ENCODE measurements at regions of chr17 and their contacts with region 1.

Region 1: GRCh38 chr17:42744806-42745617 is at the start of gene EZH1:
- H3K4me3 ChIP-seq: peak within 1 kb of the TSS; percentile 73
- H3K27ac ChIP-seq: peak within 1 kb of the TSS; percentile 79
- H3K4me1 ChIP-seq: peaks cover 9% of the 10 kb centered on the region
- CTCF ChIP-seq: no peak

Region 2: GRCh38 chr17:42337442-42337841 is 407.6 kb before region 1 on chr17:
- CTCF ChIA-PET with region 1: no interaction called
- POLR2A ChIA-PET with region 1: no interaction called
- H3K4me3 ChIP-seq: no peak overlapping the region
- H3K27ac ChIP-seq: no peak overlapping the region
- H3K4me1 ChIP-seq: peaks cover 1% of the 10 kb centered on the region; the same call in 1 of the 2 replicates
- CTCF ChIP-seq: no peak

Region 3: DNA sequence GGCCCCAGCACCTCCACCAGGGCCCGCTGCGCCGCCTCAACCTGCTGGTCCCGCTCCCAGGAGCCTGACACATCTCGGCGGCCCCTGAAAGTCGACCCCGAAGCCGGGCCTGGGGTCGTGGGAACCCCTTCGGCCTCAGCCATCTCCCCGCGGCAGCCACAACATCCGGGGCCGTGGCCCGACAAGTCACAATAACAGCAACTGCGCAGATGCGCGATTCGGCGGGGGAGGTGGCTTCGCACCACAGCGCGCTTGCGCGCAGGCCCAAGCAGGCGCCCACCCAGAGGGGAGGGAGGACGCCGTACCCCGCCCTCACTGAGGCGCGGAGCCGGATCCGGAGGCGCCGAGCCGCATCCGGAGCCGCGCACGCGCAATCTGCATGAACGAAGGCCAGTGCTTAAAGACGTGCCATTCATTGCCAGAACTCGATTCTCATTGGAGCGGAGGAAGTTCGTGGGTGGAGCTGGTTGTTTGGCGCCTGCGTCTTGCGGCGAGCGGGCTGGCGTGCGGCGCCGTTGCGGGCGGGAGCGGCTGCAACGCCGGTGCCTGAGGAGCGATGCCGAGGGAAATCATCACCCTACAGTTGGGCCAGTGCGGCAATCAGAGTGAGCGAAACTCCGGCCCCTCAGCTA is 135.7 kb before region 1 on chr17 and contains the starts of genes RETREG3 and TUBG1:
- CTCF ChIA-PET with region 1: no interaction called
- POLR2A ChIA-PET with region 1: no interaction called
- H3K4me3 ChIP-seq: peak within 1 kb of the TSS; percentile 76
- H3K27ac ChIP-seq: peak within 1 kb of the TSS; percentile 78
- H3K4me1 ChIP-seq: peaks cover 14% of the 10 kb centered on the region
- CTCF ChIP-seq: no peak; the same call in 1 of the 2 replicates

Region 4: GRCh38 chr17:42704837-42705494 is 40.0 kb before region 1 on chr17:
- CTCF ChIA-PET with region 1: no interaction called
- POLR2A ChIA-PET with region 1: no interaction called
- H3K4me3 ChIP-seq: no peak overlapping the region
- H3K27ac ChIP-seq: no peak overlapping the region
- H3K4me1 ChIP-seq: no peaks in the 10 kb centered on the region
- CTCF ChIP-seq: no peak

Region 5: DNA sequence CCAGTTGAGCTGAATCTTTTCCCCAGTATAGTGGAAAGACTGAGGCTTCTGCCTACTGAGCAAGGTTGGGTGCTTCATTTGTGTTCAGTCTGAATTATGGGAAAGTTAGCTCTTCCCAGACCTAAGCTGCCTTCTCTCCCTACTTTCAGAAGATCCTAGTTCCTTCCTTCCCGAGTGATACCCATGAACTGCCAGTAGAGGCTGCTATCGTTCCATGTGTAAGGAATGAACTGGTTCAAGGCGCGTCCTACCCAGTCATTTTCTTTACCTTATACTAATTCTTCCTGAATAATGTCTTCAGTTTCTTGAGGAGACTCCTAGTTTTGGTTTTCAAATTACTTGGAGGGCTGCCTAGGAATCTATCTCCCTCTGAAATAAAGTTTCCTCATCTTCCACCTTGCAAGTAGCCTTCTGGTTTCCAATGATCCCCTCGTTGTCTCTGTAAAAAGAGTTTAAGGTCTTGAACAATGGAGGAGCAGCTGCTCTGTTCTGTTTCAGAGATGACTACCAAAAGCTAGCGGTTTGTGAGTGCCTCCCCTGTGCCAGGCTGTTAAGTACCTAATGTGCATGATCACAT is 98.4 kb after region 1 on chr17:
- CTCF ChIA-PET with region 1: no interaction called
- POLR2A ChIA-PET with region 1: no interaction called
- H3K4me3 ChIP-seq: no peak overlapping the region
- H3K27ac ChIP-seq: no peak overlapping the region
- H3K4me1 ChIP-seq: no peaks in the 10 kb centered on the region
- CTCF ChIP-seq: peak; percentile 89

Region 6: GRCh38 chr17:42937712-42938596 is 192.9 kb after region 1 on chr17:
- CTCF ChIA-PET with region 1: interaction called, 12 read pairs
- POLR2A ChIA-PET with region 1: no interaction called
- H3K4me3 ChIP-seq: no peak overlapping the region
- H3K27ac ChIP-seq: no peak overlapping the region
- H3K4me1 ChIP-seq: no peaks in the 10 kb centered on the region
- CTCF ChIP-seq: peak; percentile 66

Measured in HEK293 (cell line).